Vagina (tissue), 2 donors: ENCODE measurements at regions of chr14 and their contacts with region 1.

Region 1: DNA sequence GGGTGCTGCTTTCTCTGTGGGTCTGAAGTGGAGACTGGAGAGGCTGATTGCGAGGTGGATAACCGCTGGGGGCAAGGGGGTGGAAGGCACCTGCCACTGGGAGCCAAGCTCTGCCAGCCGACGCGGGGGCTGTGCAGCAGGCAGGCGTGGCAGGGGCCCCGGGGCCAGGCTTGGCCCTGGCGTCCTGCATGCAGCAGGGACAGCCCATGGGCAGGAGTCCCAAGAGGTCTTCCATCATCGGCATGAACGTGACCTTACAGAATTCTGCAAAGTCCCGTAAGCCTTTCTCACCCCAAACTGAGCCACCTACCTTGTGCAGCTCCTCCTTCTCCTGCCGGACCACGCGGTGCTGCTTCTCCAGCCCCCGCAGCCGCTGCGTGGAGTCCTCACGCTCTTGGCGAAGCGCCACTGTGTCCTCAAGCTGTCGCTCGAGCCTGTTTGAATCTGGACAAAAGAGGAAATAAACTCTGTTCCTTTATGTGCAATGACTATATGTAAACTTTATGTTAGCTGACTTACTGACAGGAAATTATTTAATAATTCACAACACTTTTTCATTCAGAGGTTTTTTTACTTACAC is 51.3 kb downstream of the AMN start:
- DNase-seq: no peak
- H3K4me3 ChIP-seq: no peak overlapping the region
- H3K27ac ChIP-seq: no peak overlapping the region
- H3K4me1 ChIP-seq: no peaks in the 10 kb centered on the region
- H3K27me3 ChIP-seq: no peaks in the 10 kb centered on the region
- CTCF ChIP-seq: no peak
- POLR2A ChIP-seq: no peak

Region 2: GRCh38 chr14:103057365-103058096 is 83.7 kb after region 1 on chr14 and contains the start of gene CDC42BPB:
- intact Hi-C with region 1: loop called (anchors 10 kb)
- DNase-seq: no peak
- H3K4me3 ChIP-seq: peak within 1 kb of the TSS; percentile 86 to 99
- H3K27ac ChIP-seq: peak within 1 kb of the TSS; percentile 92
- H3K4me1 ChIP-seq: peaks cover 50% of the 10 kb centered on the region
- H3K27me3 ChIP-seq: no peaks in the 10 kb centered on the region
- CTCF ChIP-seq: no peak
- POLR2A ChIP-seq: peak in 1 of 2 donors; percentile 23
- total RNA-seq, gene CDC42BPB: 105 TPM